Panc1 (cell line): ENCODE measurements at regions of chr17 and their contacts with region 1.

Region 1: DNA sequence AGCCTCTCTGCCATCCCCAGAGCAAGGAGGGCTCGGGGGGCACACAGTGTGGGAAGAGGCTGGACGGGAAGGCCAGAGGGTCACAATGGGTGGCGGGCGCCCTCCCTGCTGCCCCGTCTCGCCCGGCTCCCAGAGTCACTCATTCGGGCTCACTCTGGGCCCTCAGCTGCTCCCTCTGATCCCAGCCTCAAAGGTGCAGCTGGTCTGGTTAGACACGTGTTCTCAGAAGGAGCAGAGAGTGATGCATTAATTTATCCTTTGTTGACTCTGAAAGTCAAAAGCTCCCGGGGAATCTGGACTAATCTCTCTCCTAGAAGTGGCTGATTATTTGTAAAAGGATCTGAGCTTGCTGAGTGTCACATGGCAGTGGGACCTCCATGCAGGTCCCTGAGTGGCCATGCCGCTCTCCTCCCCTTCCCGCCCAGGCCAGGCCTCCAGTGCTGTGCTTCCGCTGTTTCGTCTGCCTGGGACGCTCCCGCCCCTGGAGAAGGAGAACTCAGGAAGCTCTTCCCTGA is 87.5 kb downstream of the SEC14L1 start:
- DNase-seq: no peak
- ATAC-seq: peak; percentile 14; the same call in 1 of the 2 replicates
- H3K4me3 ChIP-seq: no peak overlapping the region
- H3K27ac ChIP-seq: no peak overlapping the region; the same call in 1 of the 2 replicates
- H3K4me1 ChIP-seq: no peaks in the 10 kb centered on the region
- H3K27me3 ChIP-seq: no peaks in the 10 kb centered on the region
- CTCF ChIP-seq: no peak

Region 2: GRCh38 chr17:77247048-77247541 is 18.8 kb after region 1 on chr17:
- CTCF ChIA-PET with region 1: interaction called, 14 read pairs
- POLR2A ChIA-PET with region 1: no interaction called
- in situ Hi-C with region 1: no loop called
- intact Hi-C with region 1: no loop called
- DNase-seq: peak; percentile 27
- ATAC-seq: peak; percentile 92
- H3K4me3 ChIP-seq: peak overlapping the region; percentile 43 to 58
- H3K27ac ChIP-seq: peak overlapping the region; percentile 81
- H3K4me1 ChIP-seq: peaks cover 12% of the 10 kb centered on the region; the same call in 1 of the 2 replicates
- H3K27me3 ChIP-seq: no peaks in the 10 kb centered on the region
- CTCF ChIP-seq: peak; percentile 99